Breast epithelium (tissue), 4 donors: ENCODE measurements at regions of chr16 and their contacts with region 1.

Region 1: DNA sequence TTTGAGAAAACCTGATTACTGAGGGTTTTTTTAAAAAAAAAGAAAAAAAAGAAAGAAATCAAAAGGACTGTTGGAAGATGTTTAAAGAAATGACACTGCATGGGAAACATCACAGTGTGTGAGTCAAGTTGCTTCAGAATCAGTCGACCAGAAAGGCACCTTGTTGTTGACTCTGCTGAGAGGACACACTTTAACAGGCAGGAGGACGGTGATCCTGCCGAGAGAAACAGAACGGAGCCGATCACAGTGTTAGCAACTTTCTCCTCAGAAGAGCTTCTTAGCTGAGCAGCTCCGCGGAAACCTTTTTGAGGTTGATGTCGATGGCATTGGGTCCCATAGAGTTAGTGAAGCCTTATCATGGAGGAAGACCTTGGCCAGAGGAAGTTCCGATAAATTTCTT is 538.7 kb downstream of the RBFOX1 start:
- DNase-seq: no peak
- H3K4me3 ChIP-seq: no peak overlapping the region
- H3K27ac ChIP-seq: no peak overlapping the region
- H3K4me1 ChIP-seq: no peaks in the 10 kb centered on the region
- H3K27me3 ChIP-seq: no peaks in the 10 kb centered on the region
- CTCF ChIP-seq: no peak
- POLR2A ChIP-seq: no peak

Region 2: DNA sequence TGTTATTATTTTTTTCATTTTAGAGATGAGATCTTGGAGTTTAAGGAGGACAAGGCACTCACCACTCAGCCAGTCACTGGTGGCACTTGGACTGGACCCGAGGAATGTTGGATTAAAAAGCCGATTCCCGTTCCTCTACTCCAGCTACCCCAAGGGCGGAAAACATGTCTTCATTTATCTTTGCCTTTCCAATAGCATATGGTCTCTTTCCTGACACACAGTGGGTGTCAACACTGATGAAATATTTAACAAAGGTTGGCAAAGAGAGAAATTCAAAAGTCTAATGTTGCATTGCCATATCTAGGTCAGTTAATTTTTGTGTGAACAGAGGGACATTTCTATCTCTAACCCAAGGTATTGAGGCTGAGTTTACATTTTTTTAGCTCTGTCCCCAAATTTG is 79.0 kb before region 1 on chr16:
- intact Hi-C with region 1: no loop called
- DNase-seq: no peak
- H3K4me3 ChIP-seq: no peak overlapping the region
- H3K27ac ChIP-seq: no peak overlapping the region
- H3K4me1 ChIP-seq: no peaks in the 10 kb centered on the region
- H3K27me3 ChIP-seq: no peaks in the 10 kb centered on the region
- CTCF ChIP-seq: no peak
- POLR2A ChIP-seq: no peak

Region 3: GRCh38 chr16:7839568-7839967 is 31.8 kb before region 1 on chr16:
- intact Hi-C with region 1: loop called (anchors 1 kb)
- DNase-seq: no peak
- H3K4me3 ChIP-seq: no peak overlapping the region
- H3K27ac ChIP-seq: no peak overlapping the region
- H3K4me1 ChIP-seq: no peaks in the 10 kb centered on the region
- H3K27me3 ChIP-seq: no peaks in the 10 kb centered on the region
- CTCF ChIP-seq: no peak
- POLR2A ChIP-seq: no peak

Region 4: DNA sequence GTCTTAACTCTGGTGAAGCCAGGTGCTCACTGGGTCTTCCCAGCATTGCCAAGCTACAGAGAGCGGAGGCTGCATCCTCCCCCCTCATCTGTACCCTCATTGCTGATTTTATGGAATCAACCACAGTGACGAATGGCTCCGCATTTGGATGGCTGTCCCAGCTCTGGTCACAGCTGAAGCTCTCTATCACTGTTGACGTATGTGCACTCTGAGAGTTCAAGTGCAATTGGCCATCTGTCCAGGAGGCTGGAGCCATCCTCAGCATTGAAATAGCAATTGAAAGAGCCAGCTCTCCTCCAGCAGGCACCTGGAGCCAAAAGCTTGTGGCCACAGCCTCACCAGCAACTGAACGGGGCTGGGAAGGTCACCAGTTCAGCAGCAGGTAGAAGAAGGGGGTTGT is 224.8 kb after region 1 on chr16:
- intact Hi-C with region 1: loop called (anchors 5 kb)
- DNase-seq: no peak
- H3K4me3 ChIP-seq: no peak overlapping the region
- H3K27ac ChIP-seq: no peak overlapping the region
- H3K4me1 ChIP-seq: no peaks in the 10 kb centered on the region
- H3K27me3 ChIP-seq: no peaks in the 10 kb centered on the region
- CTCF ChIP-seq: no peak
- POLR2A ChIP-seq: no peak